Dendritic cell treated with granulocyte-macrophage colony-stimulating factor and Interleukin-4, amounts not matched to agents 40 ng/mL and 50 ng/mL, for 4 days (primary cell): ENCODE measurements at regions of chr1 and their contacts with region 1.

Region 1: GRCh38 chr1:9196129-9197040 is 38.2 kb upstream of the H6PD start:
- H3K4me3 Mint-ChIP-seq: no peak overlapping the region
- H3K27ac Mint-ChIP-seq: no peak overlapping the region
- H3K4me1 Mint-ChIP-seq: peaks cover 41% of the 10 kb centered on the region
- H3K27me3 Mint-ChIP-seq: peaks cover 61% of the 10 kb centered on the region

Region 2: GRCh38 chr1:8910914-8911313 is 285.5 kb before region 1 on chr1:
- intact Hi-C with region 1: loop called (anchors 10 kb)
- H3K4me3 Mint-ChIP-seq: no peak overlapping the region
- H3K27ac Mint-ChIP-seq: no peak overlapping the region
- H3K4me1 Mint-ChIP-seq: peaks cover 19% of the 10 kb centered on the region
- H3K27me3 Mint-ChIP-seq: peaks cover 1% of the 10 kb centered on the region

Region 3: GRCh38 chr1:9110669-9111356 is 85.6 kb before region 1 on chr1:
- intact Hi-C with region 1: loop called (anchors 1 kb)
- H3K4me3 Mint-ChIP-seq: no peak overlapping the region
- H3K27ac Mint-ChIP-seq: no peak overlapping the region
- H3K4me1 Mint-ChIP-seq: peaks cover 14% of the 10 kb centered on the region
- H3K27me3 Mint-ChIP-seq: peaks cover 5% of the 10 kb centered on the region

Region 4: GRCh38 chr1:9145021-9145668 is 51.2 kb before region 1 on chr1:
- intact Hi-C with region 1: loop called (anchors 1 kb)
- H3K4me3 Mint-ChIP-seq: no peak overlapping the region
- H3K27ac Mint-ChIP-seq: no peak overlapping the region
- H3K4me1 Mint-ChIP-seq: peaks cover 32% of the 10 kb centered on the region
- H3K27me3 Mint-ChIP-seq: peaks cover 4% of the 10 kb centered on the region

Region 5: GRCh38 chr1:9164532-9164900 is 31.9 kb before region 1 on chr1:
- intact Hi-C with region 1: loop called (anchors 5 kb)
- H3K4me3 Mint-ChIP-seq: peak overlapping the region; percentile 13
- H3K27ac Mint-ChIP-seq: peak overlapping the region; percentile 97
- H3K4me1 Mint-ChIP-seq: peaks cover 56% of the 10 kb centered on the region
- H3K27me3 Mint-ChIP-seq: peaks cover 9% of the 10 kb centered on the region